ENCODE measurements at regions of chr10 and their contacts with region 1.

Region 1: DNA sequence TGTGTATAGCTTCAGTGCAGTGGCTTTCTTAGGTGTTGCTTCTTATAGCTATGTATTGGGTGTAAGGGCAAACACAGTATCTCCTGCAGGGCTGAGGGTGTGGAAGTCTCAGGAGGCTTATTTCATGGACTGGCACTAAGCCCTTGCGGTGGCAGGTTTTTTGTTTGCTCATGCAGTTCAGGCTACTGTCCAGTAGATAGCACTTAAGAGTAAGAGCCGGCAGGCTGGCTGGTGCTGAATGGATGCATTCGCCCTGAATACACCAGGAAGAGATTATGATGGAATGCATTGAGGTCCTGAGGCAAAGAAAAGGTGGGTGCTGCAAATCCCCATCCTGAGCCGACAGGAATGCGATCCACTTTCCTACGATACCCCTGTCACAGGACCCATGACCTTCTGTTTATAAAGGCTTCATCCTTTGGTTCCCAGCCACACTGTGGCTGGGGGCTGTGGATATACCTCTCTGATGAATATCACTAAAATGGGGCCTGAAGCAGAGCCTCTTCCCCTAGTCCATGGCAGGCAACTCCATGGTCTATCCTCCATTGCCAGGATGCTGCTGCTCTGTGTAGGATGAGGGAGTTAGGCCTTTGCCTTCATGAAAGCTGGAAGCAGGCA is 44.9 kb downstream of the ANXA8 start:
- DNase-seq: peak; percentile 85
- H3K4me3 ChIP-seq: no peak overlapping the region
- H3K4me3 Mint-ChIP-seq: no peak overlapping the region
- H3K27ac Mint-ChIP-seq: peak overlapping the region; percentile 8
- H3K4me1 ChIP-seq: peaks cover 8% of the 10 kb centered on the region
- H3K4me1 Mint-ChIP-seq: peaks cover 13% of the 10 kb centered on the region
- H3K27me3 ChIP-seq: no peaks in the 10 kb centered on the region
- H3K27me3 Mint-ChIP-seq: no peaks in the 10 kb centered on the region
- CTCF ChIP-seq: peak; percentile 87 to 93

Region 2: DNA sequence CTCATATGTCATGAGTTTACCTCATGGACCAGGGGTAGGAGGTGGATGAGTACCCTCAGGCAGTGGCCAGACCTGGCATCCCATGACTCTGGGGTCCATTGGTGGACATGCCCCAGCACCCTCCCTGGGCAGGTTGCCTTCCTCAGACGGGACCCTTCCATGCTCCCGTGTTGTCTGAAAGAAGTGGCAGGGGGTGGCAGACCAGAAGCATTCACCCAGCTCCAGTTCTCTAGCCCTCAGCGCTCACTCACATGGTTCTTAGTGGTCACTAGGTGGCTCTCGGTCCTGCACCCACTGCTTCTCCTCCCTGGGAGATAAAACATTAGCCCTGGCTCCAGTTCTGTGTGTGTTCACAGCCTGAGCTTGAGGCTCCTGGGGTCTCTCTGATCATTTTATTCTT is 84.8 kb before region 1 on chr10:
- CTCF ChIA-PET with region 1: interaction called, 3 read pairs
- POLR2A ChIA-PET with region 1: no interaction called
- intact Hi-C with region 1: loop called (anchors 2 kb)
- DNase-seq: peak; percentile 47 to 49
- H3K4me3 ChIP-seq: no peak overlapping the region
- H3K4me3 Mint-ChIP-seq: no peak overlapping the region
- H3K27ac Mint-ChIP-seq: no peak overlapping the region
- H3K4me1 ChIP-seq: no peaks in the 10 kb centered on the region
- H3K4me1 Mint-ChIP-seq: no peaks in the 10 kb centered on the region
- H3K27me3 ChIP-seq: no peaks in the 10 kb centered on the region
- H3K27me3 Mint-ChIP-seq: no peaks in the 10 kb centered on the region
- CTCF ChIP-seq: peak; percentile 26 to 80

Region 3: DNA sequence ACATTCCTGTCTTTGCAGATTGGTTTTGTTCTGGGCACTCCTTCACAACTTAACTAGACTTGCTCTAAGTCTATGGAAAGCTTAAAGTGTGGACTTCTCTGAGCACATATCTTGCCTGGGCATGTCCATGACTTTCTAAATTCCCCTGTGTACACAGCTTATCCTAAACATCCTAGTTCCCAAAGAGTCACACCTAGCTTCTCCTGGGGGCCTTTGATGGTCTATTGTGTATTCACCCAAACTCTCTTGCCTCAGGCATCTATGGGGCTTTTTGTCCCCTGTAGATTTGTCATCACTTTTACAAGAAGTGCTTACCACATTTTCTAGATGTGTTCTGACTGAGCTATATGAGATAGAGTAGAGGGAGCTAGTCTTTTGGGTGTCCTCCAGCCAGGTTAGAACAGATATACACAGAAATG is 42.6 kb before region 1 on chr10:
- CTCF ChIA-PET with region 1: no interaction called
- POLR2A ChIA-PET with region 1: no interaction called
- intact Hi-C with region 1: loop called (anchors 2 kb)
- DNase-seq: peak; percentile 54 to 72
- H3K4me3 ChIP-seq: no peak overlapping the region
- H3K4me3 Mint-ChIP-seq: no peak overlapping the region
- H3K27ac Mint-ChIP-seq: peak overlapping the region; percentile 8
- H3K4me1 ChIP-seq: peaks cover 33% of the 10 kb centered on the region
- H3K4me1 Mint-ChIP-seq: peaks cover 33% of the 10 kb centered on the region
- H3K27me3 ChIP-seq: no peaks in the 10 kb centered on the region
- H3K27me3 Mint-ChIP-seq: no peaks in the 10 kb centered on the region
- CTCF ChIP-seq: no peak

Region 4: DNA sequence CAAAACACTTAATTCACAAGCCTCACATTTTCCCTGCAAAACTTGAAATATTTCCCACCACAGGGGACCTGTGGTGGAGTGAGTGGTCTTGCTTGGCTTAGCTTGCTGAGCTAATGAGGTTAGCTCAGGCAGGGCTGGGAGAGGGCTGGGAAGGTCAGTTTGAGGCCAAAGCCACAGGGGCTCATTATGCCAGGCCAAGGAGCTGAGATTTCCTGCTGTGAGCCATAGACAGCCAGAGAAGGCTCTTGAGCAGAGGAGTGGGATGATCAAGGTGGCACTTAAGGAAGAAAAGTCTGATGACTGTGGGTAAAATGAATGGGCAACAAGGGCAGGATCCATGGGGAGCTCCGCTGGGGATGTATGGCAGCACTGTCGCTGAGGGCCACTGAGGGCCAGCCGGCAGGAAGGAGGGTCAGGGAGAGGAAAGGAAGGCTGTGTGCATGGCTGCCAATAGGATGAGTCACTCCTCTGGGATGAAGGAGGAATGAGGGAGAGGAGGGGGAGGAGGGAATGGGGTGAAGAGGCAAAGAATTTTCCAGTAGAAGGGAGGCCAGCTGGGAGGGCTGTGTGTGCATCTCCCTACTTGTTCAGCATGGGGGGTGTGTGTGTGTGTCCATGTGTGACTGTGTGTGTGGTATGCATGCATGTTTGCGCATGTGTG is 36.2 kb before region 1 on chr10:
- CTCF ChIA-PET with region 1: interaction called, 4 read pairs
- POLR2A ChIA-PET with region 1: no interaction called
- intact Hi-C with region 1: loop called (anchors 2 kb)
- DNase-seq: peak; percentile 78 to 91
- H3K4me3 ChIP-seq: no peak overlapping the region
- H3K4me3 Mint-ChIP-seq: peak overlapping the region; percentile 32
- H3K27ac Mint-ChIP-seq: peak overlapping the region; percentile 66
- H3K4me1 ChIP-seq: peaks cover 70% of the 10 kb centered on the region
- H3K4me1 Mint-ChIP-seq: peaks cover 44% of the 10 kb centered on the region
- H3K27me3 ChIP-seq: no peaks in the 10 kb centered on the region
- H3K27me3 Mint-ChIP-seq: no peaks in the 10 kb centered on the region
- CTCF ChIP-seq: no peak

Region 5: DNA sequence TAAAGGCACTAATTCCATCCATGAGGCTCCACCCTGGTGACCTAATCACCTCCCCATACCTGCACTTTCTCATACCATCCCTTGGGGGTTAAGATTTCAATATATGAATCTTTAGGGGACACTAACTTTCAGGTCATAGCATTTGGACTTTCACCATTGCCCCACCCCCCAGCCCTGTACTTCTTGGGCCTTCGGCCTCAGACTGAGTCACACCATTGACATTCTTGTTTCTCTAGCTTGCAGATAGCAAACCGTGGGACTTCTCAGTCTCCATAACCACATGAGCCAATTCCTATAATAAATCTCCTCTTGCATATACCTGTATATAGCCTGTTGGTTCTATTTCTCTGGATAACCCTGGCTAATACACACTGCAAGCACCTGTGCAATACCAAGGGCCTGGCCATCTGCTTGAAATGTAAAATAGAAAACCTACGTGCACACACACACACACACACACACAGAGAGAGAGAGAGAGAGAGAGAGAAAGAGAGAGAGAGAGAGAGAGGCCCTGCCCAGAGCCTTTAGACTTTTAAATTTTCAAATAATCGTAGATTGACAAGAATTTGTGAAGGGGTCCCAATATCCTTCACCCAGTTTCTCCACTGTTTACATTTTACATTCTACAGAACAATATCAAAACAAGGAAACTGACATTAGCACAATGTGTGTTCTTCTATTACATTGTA is 19.6 kb after region 1 on chr10:
- CTCF ChIA-PET with region 1: no interaction called
- POLR2A ChIA-PET with region 1: interaction called, 9 read pairs
- intact Hi-C with region 1: loop called (anchors 2 kb)
- DNase-seq: peak; percentile 42 to 65
- H3K4me3 ChIP-seq: no peak overlapping the region
- H3K4me3 Mint-ChIP-seq: peak overlapping the region; percentile 30
- H3K27ac Mint-ChIP-seq: peak overlapping the region; percentile 63
- H3K4me1 ChIP-seq: peaks cover 36% of the 10 kb centered on the region
- H3K4me1 Mint-ChIP-seq: peaks cover 30% of the 10 kb centered on the region
- H3K27me3 ChIP-seq: no peaks in the 10 kb centered on the region
- H3K27me3 Mint-ChIP-seq: no peaks in the 10 kb centered on the region
- CTCF ChIP-seq: no peak

Measured in Caco-2 (cell line).